ENCODE measurements at regions of chr20 and their contacts with region 1.

Region 1: DNA sequence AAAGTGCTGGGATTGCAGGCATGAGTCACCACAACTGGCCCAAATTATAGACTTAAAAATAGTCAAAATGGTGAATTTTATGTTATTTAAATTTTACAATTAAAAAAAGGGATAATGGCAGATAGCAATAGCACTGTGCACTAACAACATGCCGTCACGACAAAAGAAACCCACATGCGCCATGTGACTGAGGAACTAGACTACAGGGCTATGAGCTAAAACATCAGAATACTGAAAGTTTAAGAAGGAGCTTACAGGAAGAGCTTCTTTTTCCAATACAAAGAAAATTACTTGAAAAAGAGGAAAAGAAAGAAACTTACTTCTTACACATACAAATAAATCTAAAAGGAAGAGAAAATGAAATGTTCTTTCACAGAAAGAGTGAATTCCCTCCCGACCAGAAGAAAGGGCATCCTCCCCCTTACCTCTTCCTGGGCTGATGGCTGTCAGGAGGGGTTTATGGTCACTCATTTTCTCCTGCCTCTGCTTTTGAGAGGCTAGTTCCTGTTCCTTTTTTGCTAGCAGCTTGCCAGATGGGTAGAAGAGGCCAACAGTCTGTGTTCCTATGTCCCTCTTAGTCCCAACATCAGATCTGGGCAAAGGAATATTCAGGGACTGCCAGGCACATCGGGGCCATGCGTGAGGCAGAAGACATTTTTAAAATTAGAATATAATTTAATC is 54.5 kb downstream of the DZANK1 start:
- DNase-seq: no peak
- H3K4me3 ChIP-seq: no peak overlapping the region
- H3K27ac ChIP-seq: no peak overlapping the region
- H3K4me1 ChIP-seq: peaks cover 20 to 31% of the 10 kb centered on the region in 2 donors
- H3K27me3 ChIP-seq: no peaks in the 10 kb centered on the region
- CTCF ChIP-seq: no peak
- POLR2A ChIP-seq: no peak

Region 2: GRCh38 chr20:18466894-18467730 is 54.8 kb after region 1 on chr20 and contains the starts of genes DZANK1 and POLR3F:
- intact Hi-C with region 1: loop called (anchors 5 kb)
- DNase-seq: peak; percentile 97
- H3K4me3 ChIP-seq: peak within 1 kb of the TSS; percentile 57 to 96 (median 87)
- H3K27ac ChIP-seq: peak within 1 kb of the TSS; percentile 75 to 88 (median 80)
- H3K4me1 ChIP-seq: peaks cover 6 to 19% of the 10 kb centered on the region in 2 donors
- H3K27me3 ChIP-seq: no peaks in the 10 kb centered on the region
- CTCF ChIP-seq: no peak
- POLR2A ChIP-seq: peak in 1 of 2 donors; percentile 39
- total RNA-seq, gene DZANK1: 6.7 to 10.6 (median 8.5) TPM
- total RNA-seq, gene POLR3F: 10.2 to 18.1 (median 13.9) TPM